ENCODE measurements at regions of chr11 and their contacts with region 1.

Region 1: DNA sequence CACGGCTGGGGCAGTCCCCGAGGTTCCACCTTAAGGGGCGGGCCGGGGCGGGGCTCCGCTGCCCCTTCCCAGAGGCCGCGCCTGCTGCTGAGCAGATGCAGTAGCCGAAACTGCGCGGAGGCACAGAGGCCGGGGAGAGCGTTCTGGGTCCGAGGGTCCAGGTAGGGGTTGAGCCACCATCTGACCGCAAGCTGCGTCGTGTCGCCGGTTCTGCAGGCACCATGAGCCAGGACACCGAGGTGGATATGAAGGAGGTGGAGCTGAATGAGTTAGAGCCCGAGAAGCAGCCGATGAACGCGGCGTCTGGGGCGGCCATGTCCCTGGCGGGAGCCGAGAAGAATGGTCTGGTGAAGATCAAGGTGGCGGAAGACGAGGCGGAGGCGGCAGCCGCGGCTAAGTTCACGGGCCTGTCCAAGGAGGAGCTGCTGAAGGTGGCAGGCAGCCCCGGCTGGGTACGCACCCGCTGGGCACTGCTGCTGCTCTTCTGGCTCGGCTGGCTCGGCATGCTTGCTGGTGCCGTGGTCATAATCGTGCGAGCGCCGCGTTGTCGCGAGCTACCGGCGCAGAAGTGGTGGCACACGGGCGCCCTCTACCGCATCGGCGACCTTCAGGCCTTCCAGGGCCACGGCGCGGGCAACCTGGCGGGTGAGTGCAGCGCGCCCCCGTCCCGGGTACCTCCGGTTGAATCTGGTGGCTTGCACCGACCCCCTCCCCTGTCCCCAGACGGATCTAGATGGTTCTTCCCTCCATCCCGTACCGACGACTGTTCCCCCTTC is at the start of gene SLC3A2:
- DNase-seq: peak; percentile 77 to 90 (median 84)
- ATAC-seq: peak; percentile 81 to 82
- H3K4me3 Mint-ChIP-seq: peak within 1 kb of the TSS; percentile 96 to 100 (median 99)
- H3K27ac Mint-ChIP-seq: peak within 1 kb of the TSS; percentile 97 to 100 (median 100)
- H3K4me1 Mint-ChIP-seq: peaks cover 33 to 53% (median 51%) of the 10 kb centered on the region in 4 donors
- H3K27me3 Mint-ChIP-seq: no peaks in the 10 kb centered on the region
- polyA plus RNA-seq, gene SLC3A2: 119 to 164 (median 125) TPM

Region 2: DNA sequence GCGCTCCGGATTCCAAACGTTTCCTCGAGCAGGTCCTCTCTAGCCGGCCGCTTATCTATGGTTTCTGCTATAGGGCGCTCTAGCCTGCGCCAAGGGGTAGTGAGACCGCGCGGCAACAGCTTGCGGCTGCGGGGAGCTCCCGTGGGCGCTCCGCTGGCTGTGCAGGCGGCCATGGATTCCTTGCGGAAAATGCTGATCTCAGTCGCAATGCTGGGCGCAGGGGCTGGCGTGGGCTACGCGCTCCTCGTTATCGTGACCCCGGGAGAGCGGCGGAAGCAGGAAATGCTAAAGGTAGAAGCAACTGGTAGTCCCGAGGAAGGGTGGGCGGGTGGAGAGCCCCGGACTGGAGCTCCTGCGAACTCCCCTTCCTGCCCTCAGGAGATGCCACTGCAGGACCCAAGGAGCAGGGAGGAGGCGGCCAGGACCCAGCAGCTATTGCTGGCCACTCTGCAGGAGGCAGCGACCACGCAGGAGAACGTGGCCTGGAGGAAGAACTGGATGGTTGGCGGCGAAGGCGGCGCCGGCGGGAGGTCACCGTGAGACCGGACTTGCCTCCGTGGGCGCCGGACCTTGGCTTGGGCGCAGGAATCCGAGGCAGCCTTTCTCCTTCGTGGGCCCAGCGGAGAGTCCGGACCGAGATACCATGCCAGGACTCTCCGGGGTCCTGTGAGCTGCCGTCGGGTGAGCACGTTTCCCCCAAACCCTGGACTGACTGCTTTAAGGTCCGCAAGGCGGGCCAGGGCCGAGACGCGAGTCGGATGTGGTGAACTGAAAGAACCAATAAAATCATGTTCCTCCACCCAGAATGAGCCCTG is 209.2 kb before region 1 on chr11 and contains the starts of genes LBHD1 and UQCC3:
- POLR2A ChIA-PET with region 1: interaction called, 11 read pairs
- DNase-seq: peak; percentile 52 to 85 (median 68)
- ATAC-seq: peak; percentile 75 to 76
- H3K4me3 Mint-ChIP-seq: peak within 1 kb of the TSS; percentile 96 to 100 (median 98)
- H3K27ac Mint-ChIP-seq: peak within 1 kb of the TSS; percentile 92 to 99 (median 96)
- H3K4me1 Mint-ChIP-seq: peaks cover 22 to 67% (median 50%) of the 10 kb centered on the region in 4 donors
- H3K27me3 Mint-ChIP-seq: no peaks in the 10 kb centered on the region
- polyA plus RNA-seq, gene LBHD1: 2.4 to 8.3 (median 4.4) TPM
- polyA plus RNA-seq, gene UQCC3: 9.1 to 9.7 (median 9.6) TPM

Region 3: GRCh38 chr11:62771144-62772021 is 109.6 kb before region 1 on chr11 and contains the start of gene TAF6L:
- POLR2A ChIA-PET with region 1: interaction called, 17 read pairs
- DNase-seq: peak; percentile 78 to 93 (median 83)
- ATAC-seq: peak; percentile 82 to 94
- H3K4me3 Mint-ChIP-seq: peak within 1 kb of the TSS; percentile 84 to 99 (median 96)
- H3K27ac Mint-ChIP-seq: peak within 1 kb of the TSS; percentile 89 to 98 (median 96)
- H3K4me1 Mint-ChIP-seq: peaks cover 15 to 34% (median 32%) of the 10 kb centered on the region in 4 donors
- H3K27me3 Mint-ChIP-seq: no peaks in the 10 kb centered on the region
- polyA plus RNA-seq, gene TAF6L: 8.7 to 10.8 (median 8.9) TPM

Region 4: GRCh38 chr11:62805076-62805892 is 75.7 kb before region 1 on chr11 and contains the start of gene NXF1:
- POLR2A ChIA-PET with region 1: interaction called, 10 read pairs
- DNase-seq: peak; percentile 90 to 98 (median 97)
- ATAC-seq: peak; percentile 85 to 86
- H3K4me3 Mint-ChIP-seq: peak within 1 kb of the TSS; percentile 93 to 100 (median 99)
- H3K27ac Mint-ChIP-seq: peak within 1 kb of the TSS; percentile 94 to 100 (median 98)
- H3K4me1 Mint-ChIP-seq: peaks cover 11 to 40% (median 29%) of the 10 kb centered on the region in 4 donors
- H3K27me3 Mint-ChIP-seq: no peaks in the 10 kb centered on the region
- polyA plus RNA-seq, gene NXF1: 38.4 to 82.9 (median 62.8) TPM

Region 5: GRCh38 chr11:62855571-62856332 is 25.2 kb before region 1 on chr11:
- POLR2A ChIA-PET with region 1: interaction called, 56 read pairs
- DNase-seq: peak; percentile 94 to 99 (median 98)
- ATAC-seq: peak; percentile 87 to 90
- H3K4me3 Mint-ChIP-seq: peak overlapping the region; percentile 95 to 99 (median 98)
- H3K27ac Mint-ChIP-seq: peak overlapping the region; percentile 88 to 99 (median 98)
- H3K4me1 Mint-ChIP-seq: peaks cover 33 to 54% (median 52%) of the 10 kb centered on the region in 4 donors
- H3K27me3 Mint-ChIP-seq: peaks cover 0 to 4% (median 0%) of the 10 kb centered on the region in 5 donors

Region 6: DNA sequence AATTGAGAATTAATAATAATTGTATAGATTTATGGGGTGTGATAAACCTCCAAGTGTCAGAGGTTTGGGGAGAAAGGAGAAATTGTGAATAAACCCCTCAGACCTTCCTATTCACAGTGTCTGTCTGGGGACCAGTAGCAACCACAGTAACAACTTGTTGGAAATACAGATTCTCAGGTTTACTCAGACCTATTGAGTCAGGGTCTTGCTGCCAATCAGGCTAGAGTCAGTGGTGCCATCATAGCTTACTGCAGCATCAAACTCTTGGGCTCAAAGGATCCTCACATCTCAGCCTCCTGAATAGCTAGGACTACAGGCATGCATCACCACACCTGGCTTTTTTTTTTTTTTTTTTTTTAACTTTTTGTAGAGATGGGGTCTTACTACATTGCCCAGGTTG is 17.0 kb after region 1 on chr11:
- POLR2A ChIA-PET with region 1: no interaction called
- DNase-seq: no peak
- ATAC-seq: no peak
- H3K4me3 Mint-ChIP-seq: no peak overlapping the region
- H3K27ac Mint-ChIP-seq: peak overlapping the region in 1 of 10 donors; percentile 34
- H3K4me1 Mint-ChIP-seq: peaks cover 0 to 2% (median under 1%) of the 10 kb centered on the region in 4 donors
- H3K27me3 Mint-ChIP-seq: peaks cover 7 to 17% (median 12%) of the 10 kb centered on the region in 5 donors

Region 7: DNA sequence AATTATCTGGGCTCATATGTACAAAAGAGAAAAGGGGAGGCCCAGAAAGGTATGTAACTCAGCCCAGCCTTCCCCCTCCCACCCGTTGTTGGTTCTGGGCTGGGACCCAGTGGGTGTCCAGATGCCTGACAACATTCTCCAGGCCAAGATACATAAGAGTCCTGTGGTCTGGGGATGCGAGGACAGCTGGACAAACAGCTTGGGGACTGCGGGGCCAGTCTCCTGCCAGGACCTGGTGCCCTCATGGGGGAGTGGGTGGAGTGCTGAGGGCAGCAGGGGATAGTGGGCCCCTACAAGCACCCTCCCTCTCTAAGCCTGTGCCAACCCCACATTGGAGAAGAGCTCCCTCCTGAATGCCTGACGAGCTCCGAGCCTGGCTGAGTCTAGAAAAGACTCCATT is 107.3 kb after region 1 on chr11:
- POLR2A ChIA-PET with region 1: no interaction called
- DNase-seq: no peak
- ATAC-seq: no peak
- H3K4me3 Mint-ChIP-seq: no peak overlapping the region
- H3K27ac Mint-ChIP-seq: peak overlapping the region in 1 of 10 donors; percentile 57
- H3K4me1 Mint-ChIP-seq: peaks cover 0 to 2% (median 0%) of the 10 kb centered on the region in 4 donors
- H3K27me3 Mint-ChIP-seq: peaks cover 4 to 43% (median 12%) of the 10 kb centered on the region in 5 donors